Activated T-helper 2 cell treated with anti-CD3 and anti-CD28 coated beads, Interferon-gamma antibody, Interleukin-2, Interleukin-4, amounts not matched to agents 10 μg/mL and 5 μg/mL and 100 μg/mL, durations not matched to agents 14 hours and 24 hours and 36 hours (primary cell): ENCODE measurements at regions of chr3 and their contacts with region 1.

Region 1: DNA sequence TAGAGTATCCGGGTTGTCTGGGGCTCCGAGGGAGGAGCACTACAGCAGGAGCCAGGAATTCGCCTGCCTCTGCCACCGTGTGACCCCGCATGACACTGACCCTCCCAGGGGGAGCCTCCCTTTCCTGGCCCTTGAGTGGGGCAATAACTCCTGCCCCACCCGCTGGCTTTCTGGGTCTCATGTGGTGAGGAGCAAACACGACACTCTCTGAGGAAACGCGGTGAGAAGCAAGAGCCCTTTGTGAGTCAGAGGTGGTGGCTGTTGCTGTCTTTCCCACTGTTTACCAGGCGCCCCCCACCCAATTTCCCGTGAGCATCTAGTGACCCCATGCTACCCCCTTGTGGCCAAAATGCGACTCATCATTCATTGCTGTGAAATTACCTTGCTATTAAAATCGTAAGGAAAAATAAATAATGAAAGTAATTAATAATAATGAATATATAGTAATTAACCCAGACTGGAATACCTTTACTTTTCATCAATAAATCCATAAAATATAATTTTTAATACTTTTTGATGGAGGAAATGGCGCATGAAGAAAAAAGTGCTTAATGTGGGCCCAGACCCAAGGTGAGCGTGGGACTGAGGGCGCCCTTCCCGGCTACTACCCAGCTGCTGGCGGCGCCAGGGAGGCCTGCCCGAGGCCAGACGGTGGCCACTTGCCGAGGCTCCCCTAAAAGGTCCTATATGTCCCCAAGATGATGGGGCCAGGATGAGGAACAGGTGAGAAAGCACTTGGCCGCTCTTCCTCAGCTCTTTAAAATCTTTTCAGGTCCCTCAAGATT is 29.3 kb downstream of the CCNL1 start:
- DNase-seq: peak; percentile 61
- H3K4me3 Mint-ChIP-seq: peak overlapping the region; percentile 52
- H3K27ac Mint-ChIP-seq: peak overlapping the region; percentile 95
- H3K4me1 Mint-ChIP-seq: peaks cover 79% of the 10 kb centered on the region
- H3K27me3 Mint-ChIP-seq: no peaks in the 10 kb centered on the region

Region 2: DNA sequence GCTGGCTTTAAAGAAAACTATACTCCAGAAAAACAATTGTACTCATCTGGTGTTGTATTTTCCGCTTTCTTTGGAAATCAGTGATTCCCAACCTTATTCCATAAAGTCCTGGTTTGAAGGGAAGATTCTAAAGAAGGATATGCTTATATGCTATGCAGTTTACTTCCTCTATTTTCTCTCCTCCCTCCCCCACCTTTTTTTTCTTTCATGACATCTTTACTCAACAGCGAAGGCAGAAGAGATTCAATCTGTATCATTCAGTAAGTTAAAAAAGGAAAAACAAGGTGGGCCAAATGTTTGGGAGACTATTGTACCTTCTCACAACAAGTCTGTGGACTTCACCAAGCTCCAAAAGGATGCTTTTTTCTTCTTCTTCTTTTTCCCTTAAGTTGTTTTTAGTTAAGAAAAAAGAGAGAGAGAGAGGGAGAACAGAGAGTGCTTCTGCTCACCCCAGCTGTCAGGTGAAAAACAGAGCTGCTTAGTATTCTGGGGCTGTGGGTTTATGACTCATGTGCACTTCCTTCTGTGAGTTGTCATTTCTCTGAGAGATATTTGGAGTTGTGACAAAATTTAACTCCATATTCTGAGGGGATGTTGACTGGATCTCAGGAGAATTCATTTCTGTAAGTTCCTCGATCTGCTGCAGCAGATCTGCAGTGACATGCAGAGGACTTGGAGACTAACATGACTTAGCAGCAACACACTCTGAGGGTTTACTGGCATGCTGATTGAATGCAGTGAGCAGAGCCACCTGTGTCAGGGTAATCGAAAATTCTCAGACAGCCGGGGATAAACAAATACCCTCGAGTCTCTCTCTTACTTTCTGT is 646.5 kb before region 1 on chr3:
- intact Hi-C with region 1: loop called (anchors 2 kb)
- DNase-seq: peak; percentile 49
- H3K4me3 Mint-ChIP-seq: peak overlapping the region; percentile 62
- H3K27ac Mint-ChIP-seq: peak overlapping the region; percentile 86
- H3K4me1 Mint-ChIP-seq: peaks cover 24% of the 10 kb centered on the region
- H3K27me3 Mint-ChIP-seq: peaks cover 24% of the 10 kb centered on the region

Region 3: GRCh38 chr3:156781310-156782230 is 349.1 kb before region 1 on chr3:
- intact Hi-C with region 1: no loop called
- DNase-seq: no peak
- H3K4me3 Mint-ChIP-seq: no peak overlapping the region
- H3K27ac Mint-ChIP-seq: no peak overlapping the region
- H3K4me1 Mint-ChIP-seq: peaks cover 17% of the 10 kb centered on the region
- H3K27me3 Mint-ChIP-seq: no peaks in the 10 kb centered on the region

Region 4: DNA sequence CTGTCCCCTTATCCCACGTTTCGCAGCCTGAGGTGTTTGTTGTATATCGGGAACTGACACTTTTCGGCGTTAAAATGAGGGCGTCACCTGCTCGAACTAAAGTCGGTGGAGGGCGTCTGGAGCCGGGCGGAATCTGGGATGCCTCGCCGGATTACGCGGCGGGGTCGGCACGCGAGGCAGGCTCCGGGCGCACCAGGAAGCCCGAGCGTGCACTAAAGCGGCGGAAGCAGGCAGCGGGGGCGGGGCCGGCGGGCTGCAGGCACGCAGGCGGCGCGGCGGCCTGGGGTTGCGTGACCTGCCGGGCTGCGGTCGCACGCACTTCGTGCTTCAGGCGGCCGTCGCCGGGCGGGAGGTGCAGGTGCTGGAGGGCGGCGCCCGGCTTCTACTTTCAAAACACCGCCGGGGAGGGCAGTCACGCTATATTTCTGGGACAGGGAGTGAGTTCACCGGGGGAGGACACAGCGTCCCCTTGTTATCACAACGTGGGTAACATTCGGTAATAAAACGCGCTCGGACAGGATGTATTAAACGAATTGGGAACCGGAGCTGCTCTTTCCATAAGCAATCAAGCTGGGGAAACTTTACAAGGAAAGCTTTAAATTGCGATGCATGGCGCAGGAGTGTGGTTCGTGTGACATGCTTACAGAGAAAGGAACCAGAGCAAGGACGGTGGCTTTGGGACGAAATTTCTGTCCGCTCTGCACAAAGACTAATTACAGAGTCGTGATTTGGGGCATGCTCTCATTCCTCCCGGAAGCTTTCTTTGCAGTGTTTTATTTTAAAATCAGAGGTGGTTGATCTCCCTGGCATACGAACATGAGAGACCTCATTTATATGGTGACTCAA is 313.6 kb before region 1 on chr3:
- intact Hi-C with region 1: loop called (anchors 1 kb)
- DNase-seq: peak; percentile 94
- H3K4me3 Mint-ChIP-seq: peak overlapping the region; percentile 84
- H3K27ac Mint-ChIP-seq: peak overlapping the region; percentile 95
- H3K4me1 Mint-ChIP-seq: peaks cover 67% of the 10 kb centered on the region
- H3K27me3 Mint-ChIP-seq: no peaks in the 10 kb centered on the region

Region 5: GRCh38 chr3:156978481-156978961 is 152.1 kb before region 1 on chr3:
- intact Hi-C with region 1: loop called (anchors 10 kb)
- DNase-seq: no peak
- H3K4me3 Mint-ChIP-seq: no peak overlapping the region
- H3K27ac Mint-ChIP-seq: no peak overlapping the region
- H3K4me1 Mint-ChIP-seq: peaks cover 7% of the 10 kb centered on the region
- H3K27me3 Mint-ChIP-seq: peaks cover 27% of the 10 kb centered on the region

Region 6: GRCh38 chr3:157103280-157103679 is 27.4 kb before region 1 on chr3:
- intact Hi-C with region 1: loop called (anchors 1 kb)
- DNase-seq: no peak
- H3K4me3 Mint-ChIP-seq: no peak overlapping the region
- H3K27ac Mint-ChIP-seq: peak overlapping the region; percentile 76
- H3K4me1 Mint-ChIP-seq: peaks cover 44% of the 10 kb centered on the region
- H3K27me3 Mint-ChIP-seq: no peaks in the 10 kb centered on the region

Region 7: DNA sequence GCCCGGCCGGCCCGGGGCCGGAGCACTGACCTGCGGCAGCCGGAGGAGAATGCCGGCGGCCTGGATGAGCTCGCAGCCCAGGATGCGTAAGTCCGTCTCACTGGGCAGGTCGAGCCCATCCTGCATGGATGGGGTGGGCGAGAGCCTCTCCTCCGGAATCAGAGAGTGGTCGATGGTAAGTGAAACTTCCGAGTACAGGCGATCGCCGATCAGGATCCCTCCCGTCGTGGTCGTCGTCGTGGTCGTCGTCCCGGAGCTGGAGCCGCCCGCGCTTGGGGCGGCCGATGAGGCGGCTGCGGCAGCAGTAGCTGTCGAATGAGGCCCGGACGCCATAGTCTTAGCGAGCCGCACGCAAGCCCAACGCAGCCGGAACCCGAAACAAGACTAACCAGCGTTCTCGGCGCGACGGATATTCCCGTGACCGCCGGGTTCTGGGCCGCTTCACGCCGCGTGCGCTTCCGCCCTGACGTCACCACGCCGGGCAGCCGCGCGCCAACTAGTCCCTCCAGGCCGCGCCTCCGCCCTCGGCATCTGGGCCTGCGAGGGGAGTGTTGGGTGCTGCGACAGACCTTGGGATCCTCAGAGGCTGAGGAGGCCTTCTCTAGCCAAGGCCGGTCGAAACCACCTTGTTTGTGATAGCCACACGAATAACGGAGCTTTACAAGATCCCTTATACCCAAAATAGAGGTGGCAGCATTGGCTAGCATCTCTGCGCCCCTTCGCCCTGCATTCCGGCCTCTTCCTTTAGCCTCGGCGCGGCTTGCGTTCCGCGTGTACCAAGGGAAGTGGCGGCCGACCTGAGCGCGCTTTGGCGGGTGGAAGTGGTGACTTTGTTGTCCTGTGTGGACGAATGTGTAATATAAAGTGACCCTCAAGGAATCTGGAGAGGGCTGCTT is 29.4 kb after region 1 on chr3 and contains the start of gene CCNL1:
- intact Hi-C with region 1: loop called (anchors 1 kb)
- DNase-seq: peak; percentile 95
- H3K4me3 Mint-ChIP-seq: peak within 1 kb of the TSS; percentile 99
- H3K27ac Mint-ChIP-seq: peak within 1 kb of the TSS; percentile 98
- H3K4me1 Mint-ChIP-seq: peaks cover 52% of the 10 kb centered on the region
- H3K27me3 Mint-ChIP-seq: no peaks in the 10 kb centered on the region
- total RNA-seq, gene CCNL1: 160 and 167 TPM in 2 replicates

Region 8: DNA sequence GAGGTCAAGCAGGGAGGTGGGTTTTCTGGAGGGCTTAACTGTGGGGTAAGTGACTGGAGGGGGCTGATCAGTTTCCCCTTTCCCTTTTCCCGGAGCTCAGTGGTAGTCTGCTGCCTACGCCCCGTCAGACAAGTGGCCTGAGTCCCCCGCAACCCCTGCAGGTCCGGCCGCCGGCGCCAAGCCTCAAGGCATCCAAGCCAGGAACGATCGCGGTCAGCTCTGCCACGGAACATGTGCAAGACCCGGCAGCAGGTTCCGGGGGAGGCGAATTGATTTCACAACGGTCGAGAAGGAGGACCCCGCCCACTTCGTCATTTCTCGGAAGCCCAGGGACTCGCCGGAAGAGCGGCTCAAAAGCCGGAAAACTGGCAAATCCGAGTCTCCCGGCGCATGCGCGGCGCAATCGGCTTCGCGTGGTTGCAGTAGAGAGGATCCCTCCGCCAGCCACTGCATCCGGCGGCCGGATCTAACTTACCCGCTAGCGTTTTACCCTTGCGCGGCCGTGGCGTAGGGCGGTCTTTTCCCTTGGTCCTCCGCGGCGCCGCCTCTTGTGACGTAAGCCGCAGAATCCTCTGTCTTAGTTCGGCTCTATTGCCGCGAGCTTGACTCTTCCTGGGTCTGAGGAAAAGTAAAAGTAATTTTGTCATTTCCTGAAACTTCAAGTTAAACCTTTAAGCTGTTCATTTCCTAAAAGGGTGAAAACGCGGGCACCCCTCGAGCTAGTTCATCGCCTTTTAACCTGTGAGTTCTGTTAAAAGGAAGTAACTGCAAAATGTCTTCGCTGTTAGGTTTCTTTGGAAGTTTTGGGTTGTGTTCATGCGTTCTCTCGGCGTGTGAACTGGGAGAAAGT is 44.2 kb after region 1 on chr3:
- intact Hi-C with region 1: loop called (anchors 1 kb)
- DNase-seq: peak; percentile 99
- H3K4me3 Mint-ChIP-seq: peak overlapping the region; percentile 97
- H3K27ac Mint-ChIP-seq: peak overlapping the region; percentile 96
- H3K4me1 Mint-ChIP-seq: peaks cover 38% of the 10 kb centered on the region
- H3K27me3 Mint-ChIP-seq: no peaks in the 10 kb centered on the region

Region 9: GRCh38 chr3:157436583-157437291 is 306.1 kb after region 1 on chr3 and contains the start of gene PTX3:
- intact Hi-C with region 1: no loop called
- DNase-seq: no peak
- H3K4me3 Mint-ChIP-seq: peak within 1 kb of the TSS; percentile 50
- H3K27ac Mint-ChIP-seq: no peak within 1 kb of the TSS
- H3K4me1 Mint-ChIP-seq: peaks cover 6% of the 10 kb centered on the region
- H3K27me3 Mint-ChIP-seq: peaks cover 53% of the 10 kb centered on the region
- total RNA-seq, gene PTX3: not detected in 2 replicates